Activated T-helper 1 cell treated with anti-CD3 and anti-CD28 coated beads, Interleukin-12 subunit alpha, Interleukin-12 subunit beta, Interleukin-2, Interleukin-4 antibody, amounts not matched to agents 30 ng/mL and 10 ng/mL and 1 ng/mL, durations not matched to agents 14 hours and 24 hours and 36 hours (primary cell): ENCODE measurements at regions of chr17 and their contacts with region 1.

Region 1: DNA sequence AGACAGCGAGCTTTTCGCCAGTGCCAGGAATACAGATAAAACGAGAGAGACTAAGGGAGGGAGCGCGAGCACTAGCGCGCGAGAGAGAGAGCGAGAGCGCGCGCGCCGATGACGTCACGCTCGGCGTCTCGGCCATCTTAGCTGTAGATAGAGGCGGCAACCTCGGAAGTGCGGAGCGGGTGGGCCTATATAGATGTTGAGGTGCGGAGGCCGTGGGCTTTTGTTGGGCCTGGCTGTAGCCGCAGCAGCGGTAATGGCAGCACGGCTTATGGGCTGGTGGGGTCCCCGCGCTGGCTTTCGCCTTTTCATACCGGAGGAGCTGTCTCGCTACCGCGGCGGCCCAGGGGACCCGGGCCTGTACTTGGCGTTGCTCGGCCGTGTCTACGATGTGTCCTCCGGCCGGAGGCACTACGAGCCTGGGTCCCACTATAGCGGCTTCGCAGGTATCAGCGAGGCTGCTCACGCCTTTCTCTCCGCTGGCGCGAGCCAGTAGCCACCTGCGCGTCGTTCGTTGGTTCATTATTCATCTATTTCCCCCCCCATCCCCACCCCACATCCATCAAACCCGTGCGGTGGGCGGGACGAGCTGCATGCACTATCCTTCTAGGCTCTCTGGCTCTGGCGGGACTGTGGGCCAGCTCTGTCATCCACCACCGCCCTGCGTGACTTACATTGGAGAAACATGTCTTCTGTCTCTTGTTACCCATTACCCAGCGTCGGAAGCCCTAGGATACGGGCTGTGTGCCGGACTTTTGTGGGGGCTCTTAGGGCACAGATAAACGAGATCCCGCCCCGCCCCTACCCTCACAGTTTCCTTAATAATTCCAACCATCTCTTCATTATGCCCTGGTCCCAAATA is 795 bp downstream of the CYB5D2 start:
- DNase-seq: peak; percentile 86
- H3K4me3 Mint-ChIP-seq: peak overlapping the region; percentile 98
- H3K27ac Mint-ChIP-seq: peak overlapping the region; percentile 99
- H3K4me1 Mint-ChIP-seq: peaks cover 39% of the 10 kb centered on the region
- H3K27me3 Mint-ChIP-seq: no peaks in the 10 kb centered on the region

Region 2: GRCh38 chr17:3913531-3914311 is 230.1 kb before region 1 on chr17:
- intact Hi-C with region 1: loop called (anchors 5 kb)
- DNase-seq: peak; percentile 68
- H3K4me3 Mint-ChIP-seq: no peak overlapping the region
- H3K27ac Mint-ChIP-seq: peak overlapping the region; percentile 16
- H3K4me1 Mint-ChIP-seq: peaks cover 38% of the 10 kb centered on the region
- H3K27me3 Mint-ChIP-seq: no peaks in the 10 kb centered on the region

Region 3: DNA sequence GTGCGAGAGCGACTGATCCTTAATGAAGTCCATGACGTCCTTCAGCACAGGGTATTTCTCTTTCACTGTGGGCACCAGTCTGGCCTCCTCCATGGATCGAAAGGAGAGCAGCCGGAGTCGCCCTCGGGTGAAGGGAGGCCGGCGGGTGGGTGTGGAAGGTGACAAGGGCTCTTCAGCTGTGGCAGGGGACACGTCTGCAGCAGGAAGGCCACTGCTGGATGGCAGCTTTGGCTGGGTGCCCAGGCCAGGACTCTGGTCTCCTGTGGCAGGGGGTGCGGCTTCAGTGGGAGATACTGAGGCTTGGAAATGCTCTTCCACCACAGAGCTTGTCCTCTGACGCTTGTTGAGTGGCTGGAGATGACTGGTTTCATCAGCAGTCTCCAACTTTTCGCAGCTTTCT is 79.4 kb before region 1 on chr17:
- intact Hi-C with region 1: no loop called
- DNase-seq: no peak
- H3K4me3 Mint-ChIP-seq: no peak overlapping the region
- H3K27ac Mint-ChIP-seq: no peak overlapping the region
- H3K4me1 Mint-ChIP-seq: no peaks in the 10 kb centered on the region
- H3K27me3 Mint-ChIP-seq: no peaks in the 10 kb centered on the region

Region 4: DNA sequence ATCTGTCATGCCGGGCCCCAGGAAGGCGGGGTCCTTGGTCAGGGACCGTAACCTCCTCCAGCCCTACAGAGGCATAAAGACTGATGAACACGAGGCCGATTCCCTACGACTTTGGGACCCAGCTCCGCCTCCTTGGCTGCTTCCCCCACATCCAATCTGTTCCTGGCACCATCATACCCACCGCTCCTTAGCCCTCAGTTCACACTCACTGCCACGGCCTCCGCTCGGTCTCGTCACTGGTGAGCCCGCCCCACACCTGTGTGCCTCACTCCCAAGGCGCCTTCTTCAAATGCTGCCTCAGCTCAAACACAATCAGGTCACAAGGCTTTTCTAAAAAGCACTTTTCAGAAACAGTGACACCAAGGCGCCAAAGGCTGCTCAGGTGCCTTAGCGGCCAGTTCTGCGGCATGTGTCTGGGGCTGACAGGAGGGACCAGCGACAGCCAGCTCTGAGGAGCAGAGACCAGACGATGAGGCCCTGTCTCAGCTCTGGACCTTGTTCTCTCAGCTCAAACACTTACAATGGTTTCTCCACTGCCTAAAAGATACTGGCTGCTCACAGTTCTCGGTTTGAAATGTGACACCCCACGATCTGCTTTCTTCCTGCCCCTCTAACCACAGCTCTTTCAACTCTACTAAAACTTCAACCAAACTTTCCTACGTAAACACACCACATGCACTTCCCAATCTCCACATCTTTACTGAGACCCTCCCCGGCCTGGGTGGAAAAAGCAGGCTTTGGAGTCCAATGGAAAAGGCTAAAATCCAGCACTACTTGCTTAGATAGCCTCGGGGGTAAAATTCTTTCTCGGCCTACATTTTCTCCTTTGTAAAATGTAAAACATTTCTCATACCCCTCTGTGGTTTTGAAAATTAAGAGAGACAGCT is 32.4 kb after region 1 on chr17:
- intact Hi-C with region 1: loop called (anchors 1 kb)
- DNase-seq: peak; percentile 40
- H3K4me3 Mint-ChIP-seq: peak overlapping the region; percentile 67
- H3K27ac Mint-ChIP-seq: peak overlapping the region; percentile 93
- H3K4me1 Mint-ChIP-seq: peaks cover 47% of the 10 kb centered on the region
- H3K27me3 Mint-ChIP-seq: no peaks in the 10 kb centered on the region

Region 5: DNA sequence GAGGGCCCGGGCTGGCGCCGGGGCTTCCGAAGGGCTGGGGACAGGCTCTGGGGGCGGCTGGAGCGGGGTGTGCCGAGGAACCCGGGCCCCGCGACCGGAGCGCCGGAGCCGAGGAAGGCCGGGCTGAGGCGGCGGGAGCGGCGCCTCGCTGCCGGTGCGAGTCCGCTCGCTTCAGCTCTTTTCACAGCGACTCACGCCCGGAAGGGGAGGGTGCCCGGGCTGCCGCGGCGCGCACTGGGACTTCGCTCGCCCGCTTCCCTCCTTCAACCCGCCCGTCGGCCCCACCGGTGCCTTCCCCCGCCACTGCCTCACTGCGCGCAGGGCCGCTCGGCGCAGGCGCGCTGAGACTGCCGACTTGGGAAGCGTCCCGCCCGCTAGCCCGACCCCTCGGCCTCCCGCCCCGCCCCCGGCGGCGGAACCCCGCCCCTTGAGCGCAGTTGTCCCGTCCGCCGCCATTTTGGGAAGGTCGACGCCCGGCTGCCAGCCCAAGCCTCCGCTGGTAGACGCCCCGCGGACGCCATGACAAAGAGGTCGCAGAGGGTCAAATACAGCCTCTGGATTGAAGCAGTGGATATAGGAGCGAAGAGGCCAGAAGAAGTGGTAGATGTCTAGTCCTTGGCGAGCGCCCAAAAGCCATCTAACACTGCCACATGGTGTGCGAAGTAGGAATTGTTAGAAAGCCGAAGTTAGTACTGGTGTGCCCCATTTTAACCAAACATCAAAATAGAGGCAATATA is 222.7 kb after region 1 on chr17 and contains the start of gene UBE2G1:
- intact Hi-C with region 1: loop called (anchors 1 kb)
- DNase-seq: peak; percentile 97
- H3K4me3 Mint-ChIP-seq: peak within 1 kb of the TSS; percentile 72
- H3K27ac Mint-ChIP-seq: peak within 1 kb of the TSS; percentile 86
- H3K4me1 Mint-ChIP-seq: peaks cover 30% of the 10 kb centered on the region
- H3K27me3 Mint-ChIP-seq: no peaks in the 10 kb centered on the region
- total RNA-seq, gene UBE2G1: 80.3 and 87.3 TPM in 2 replicates

Region 6: DNA sequence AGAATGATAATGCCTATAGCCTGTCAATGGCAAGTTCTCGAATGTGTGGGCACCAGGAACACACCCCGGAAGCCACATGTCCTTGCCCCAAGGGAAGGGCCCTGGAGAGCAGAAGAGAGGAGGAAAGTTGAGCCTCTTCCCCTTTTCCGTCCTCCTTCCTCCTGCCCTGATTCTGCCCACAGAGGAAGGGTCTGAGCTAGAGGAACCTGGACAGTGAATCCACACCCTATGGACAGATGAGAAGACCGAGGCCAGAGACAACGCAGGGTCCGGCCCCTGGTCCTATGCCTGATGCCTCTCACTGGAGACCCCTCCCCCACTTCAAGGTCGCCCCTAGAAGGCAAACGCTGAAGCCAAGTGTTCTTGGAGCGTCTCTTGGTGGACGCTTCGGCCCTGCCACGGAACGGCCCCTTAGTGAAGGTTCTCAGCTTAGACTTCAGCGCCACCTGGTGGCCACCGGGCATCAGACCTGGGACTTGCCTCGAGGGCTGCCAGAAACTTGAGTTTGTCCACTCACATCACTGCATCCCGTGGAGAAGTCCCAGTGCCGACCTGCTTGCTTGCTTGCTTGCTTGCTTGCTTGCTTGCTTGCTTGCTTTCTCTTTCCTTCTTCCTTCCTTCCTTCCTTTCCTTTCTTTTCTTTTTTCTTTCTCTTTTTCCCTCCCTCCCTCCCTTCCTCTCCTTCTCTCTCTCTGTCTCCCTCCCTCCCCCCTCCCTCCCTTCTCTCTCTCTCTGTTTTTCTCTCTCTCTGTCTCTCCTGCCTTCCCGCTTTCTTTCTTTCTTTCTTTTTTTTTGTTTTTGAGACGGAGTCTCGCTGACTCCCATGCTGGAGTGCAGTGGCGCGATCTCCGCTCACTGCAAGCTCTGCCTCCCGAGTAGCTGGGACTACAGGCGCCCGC is 269.4 kb after region 1 on chr17:
- intact Hi-C with region 1: loop called (anchors 1 kb)
- DNase-seq: peak; percentile 82
- H3K4me3 Mint-ChIP-seq: peak overlapping the region; percentile 50
- H3K27ac Mint-ChIP-seq: peak overlapping the region; percentile 59
- H3K4me1 Mint-ChIP-seq: peaks cover 5% of the 10 kb centered on the region
- H3K27me3 Mint-ChIP-seq: peaks cover 2% of the 10 kb centered on the region

Region 7: GRCh38 chr17:4948931-4949320 is 805.1 kb after region 1 on chr17:
- intact Hi-C with region 1: loop called (anchors 2 kb)
- DNase-seq: peak; percentile 77
- H3K4me3 Mint-ChIP-seq: peak overlapping the region; percentile 97
- H3K27ac Mint-ChIP-seq: peak overlapping the region; percentile 100
- H3K4me1 Mint-ChIP-seq: peaks cover 49% of the 10 kb centered on the region
- H3K27me3 Mint-ChIP-seq: peaks cover 2% of the 10 kb centered on the region